Common myeloid progenitor, CD34-positive (primary cell): ENCODE measurements at regions of chr14 and their contacts with region 1.

Region 1: DNA sequence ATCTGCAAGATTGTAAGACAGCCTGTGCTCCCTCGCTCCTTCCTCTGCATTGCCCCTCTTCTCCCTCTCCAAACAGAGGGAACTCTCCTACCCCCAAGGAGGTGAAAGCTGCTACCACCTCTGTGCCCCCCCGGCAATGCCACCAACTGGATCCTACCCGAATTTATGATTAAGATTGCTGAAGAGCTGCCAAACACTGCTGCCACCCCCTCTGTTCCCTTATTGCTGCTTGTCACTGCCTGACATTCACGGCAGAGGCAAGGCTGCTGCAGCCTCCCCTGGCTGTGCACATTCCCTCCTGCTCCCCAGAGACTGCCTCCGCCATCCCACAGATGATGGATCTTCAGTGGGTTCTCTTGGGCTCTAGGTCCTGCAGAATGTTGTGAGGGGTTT is 37.4 kb downstream of the DAD1 start:
- DNase-seq: no peak
- H3K4me3 ChIP-seq: no peak overlapping the region
- H3K27ac ChIP-seq: no peak overlapping the region
- H3K4me1 ChIP-seq: peaks cover 9 to 54% (median 45%) of the 10 kb centered on the region in 4 experiments
- H3K27me3 ChIP-seq: no peaks in the 10 kb centered on the region

Region 2: GRCh38 chr14:22512106-22512814 is 39.3 kb before region 1 on chr14:
- CTCF ChIA-PET with region 1: interaction called, 10 read pairs
- POLR2A ChIA-PET with region 1: interaction called, 4 read pairs
- DNase-seq: peak in 1 of 3 donors; percentile 31
- H3K4me3 ChIP-seq: no peak overlapping the region
- H3K27ac ChIP-seq: no peak overlapping the region
- H3K4me1 ChIP-seq: peaks cover 0 to 10% (median 4%) of the 10 kb centered on the region in 4 experiments
- H3K27me3 ChIP-seq: no peaks in the 10 kb centered on the region

Region 3: DNA sequence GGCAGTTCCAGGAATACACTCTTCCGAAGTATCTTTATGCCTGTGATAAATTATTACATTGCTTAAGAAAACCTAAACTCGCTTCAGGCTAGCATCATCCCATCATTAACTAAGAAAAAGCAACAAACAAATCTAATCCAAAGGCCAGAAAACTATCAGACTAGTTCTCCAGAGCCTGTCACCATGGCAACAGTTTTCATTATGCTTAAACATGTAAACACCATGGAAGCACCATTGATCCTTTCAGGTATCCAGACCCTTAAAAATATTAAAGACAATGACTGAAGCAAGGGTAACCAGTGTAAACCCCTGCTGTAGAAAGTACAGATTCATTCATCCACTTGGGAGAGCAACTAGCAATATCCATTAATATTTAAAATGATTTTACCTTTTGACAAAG is 27.6 kb after region 1 on chr14:
- CTCF ChIA-PET with region 1: no interaction called
- POLR2A ChIA-PET with region 1: no interaction called
- DNase-seq: no peak
- H3K4me3 ChIP-seq: no peak overlapping the region
- H3K27ac ChIP-seq: no peak overlapping the region
- H3K4me1 ChIP-seq: peaks cover 6 to 17% (median 12%) of the 10 kb centered on the region in 4 experiments
- H3K27me3 ChIP-seq: no peaks in the 10 kb centered on the region